ENCODE measurements at regions of chr1 and their contacts with region 1.

Region 1: DNA sequence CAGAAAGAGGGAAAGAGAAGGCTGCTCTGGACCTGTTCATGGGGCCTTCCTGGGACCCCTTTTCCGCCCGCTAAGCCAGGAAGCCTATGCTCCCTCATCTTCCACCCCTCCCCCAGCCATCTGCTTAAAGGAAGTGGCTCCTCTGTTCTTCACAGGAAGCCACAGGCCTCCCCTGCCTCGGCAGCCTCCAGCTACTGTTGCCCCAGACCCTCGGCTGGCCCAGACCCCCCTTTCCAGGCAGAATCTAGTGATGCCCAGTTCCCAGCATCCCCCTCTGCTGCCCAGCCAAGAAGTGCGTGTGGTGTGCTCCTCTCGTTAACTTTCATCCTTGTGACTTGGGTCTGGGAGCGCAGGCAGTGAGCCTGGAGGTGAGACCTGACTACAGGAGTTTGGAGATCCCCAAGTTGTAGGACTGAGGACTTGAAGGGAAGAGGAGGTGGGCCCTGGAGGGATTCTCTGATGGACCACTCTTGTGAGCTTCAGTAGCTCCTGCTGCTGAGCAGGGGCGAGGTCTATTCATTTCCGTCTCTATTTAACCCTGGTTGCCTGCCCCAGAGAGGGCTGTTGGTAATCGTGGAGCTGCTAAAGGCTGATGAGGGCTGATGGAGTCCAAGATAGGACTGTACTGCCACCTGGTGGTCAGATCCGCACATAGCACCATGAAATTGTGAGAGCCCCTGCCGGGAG is 9.1 kb downstream of the IFI6 start:
- DNase-seq: peak; percentile 76
- CTCF ChIP-seq: peak; percentile 82

Region 2: DNA sequence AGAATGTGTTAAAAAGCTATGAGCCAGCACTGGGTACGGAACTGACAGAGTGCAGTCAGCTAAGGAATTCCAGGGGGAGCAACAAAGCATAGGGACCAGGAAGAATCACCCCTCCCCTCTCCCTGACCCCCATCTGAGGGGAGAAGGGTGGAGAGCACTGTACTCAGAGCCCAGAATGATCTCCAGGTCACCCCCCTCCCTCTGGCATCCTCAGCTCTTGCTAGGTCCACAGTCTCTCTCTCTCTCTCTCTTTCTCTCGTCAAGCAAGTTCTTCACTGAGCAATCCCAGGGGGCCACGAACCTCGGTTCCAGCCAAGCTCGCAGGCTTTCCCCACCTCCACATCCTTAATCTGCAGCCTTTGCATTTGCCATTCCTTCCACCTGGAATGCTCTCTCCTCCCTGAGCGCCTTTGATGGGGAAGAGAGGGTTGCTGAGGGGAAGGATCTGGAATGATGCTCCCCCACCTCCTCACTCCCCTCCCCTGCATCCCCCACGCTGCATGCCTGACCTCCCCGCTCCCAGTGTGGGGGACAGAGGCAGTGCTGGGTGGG is 166.2 kb before region 1 on chr1:
- CTCF ChIA-PET with region 1: no interaction called
- POLR2A ChIA-PET with region 1: no interaction called
- DNase-seq: no peak
- CTCF ChIP-seq: no peak

Region 3: DNA sequence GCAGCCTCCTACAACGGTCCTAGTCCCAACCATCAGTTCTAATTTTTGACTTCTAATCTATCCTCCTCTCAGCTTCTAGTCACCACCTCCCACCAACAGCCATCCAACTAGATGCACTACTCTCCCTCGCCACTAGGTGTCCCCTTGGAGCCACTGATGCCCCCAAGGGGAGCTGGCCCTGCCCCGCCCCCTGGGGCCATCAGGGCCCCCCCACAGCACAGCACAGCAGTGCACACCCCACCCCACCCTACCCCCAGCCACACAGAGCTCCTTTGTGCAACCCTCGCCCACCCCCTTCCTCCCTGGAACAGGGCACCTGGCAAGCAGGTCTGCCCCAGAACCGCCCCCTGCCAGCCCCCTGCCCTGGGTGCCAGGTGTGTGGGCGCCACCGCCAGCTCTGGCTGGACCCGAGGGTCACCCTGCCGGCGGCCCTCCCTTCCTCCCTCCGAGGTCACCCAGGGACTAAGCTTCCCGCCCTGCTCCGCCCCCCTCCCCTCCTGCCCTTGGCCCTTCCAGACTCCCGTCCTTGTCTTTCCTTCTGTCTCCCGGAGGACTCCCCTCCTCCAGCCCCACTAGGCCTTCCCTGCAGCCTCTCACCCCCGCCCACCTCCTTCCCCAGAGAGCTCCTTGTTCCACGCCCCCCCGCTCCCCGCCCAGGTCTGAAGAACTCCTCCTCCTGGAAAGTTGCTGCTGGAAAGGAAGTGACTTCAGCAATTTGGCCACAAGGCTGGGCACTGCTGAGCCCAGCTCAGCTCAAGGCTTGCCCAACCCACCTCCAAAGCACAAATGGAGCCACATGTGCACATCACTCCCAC is 105.9 kb before region 1 on chr1:
- CTCF ChIA-PET with region 1: interaction called, 51 read pairs
- POLR2A ChIA-PET with region 1: no interaction called
- DNase-seq: peak; percentile 91
- CTCF ChIP-seq: peak; percentile 85

Region 4: GRCh38 chr1:27581823-27582243 is 81.0 kb before region 1 on chr1:
- CTCF ChIA-PET with region 1: interaction called, 11 read pairs
- POLR2A ChIA-PET with region 1: no interaction called
- DNase-seq: no peak
- CTCF ChIP-seq: no peak

Region 5: DNA sequence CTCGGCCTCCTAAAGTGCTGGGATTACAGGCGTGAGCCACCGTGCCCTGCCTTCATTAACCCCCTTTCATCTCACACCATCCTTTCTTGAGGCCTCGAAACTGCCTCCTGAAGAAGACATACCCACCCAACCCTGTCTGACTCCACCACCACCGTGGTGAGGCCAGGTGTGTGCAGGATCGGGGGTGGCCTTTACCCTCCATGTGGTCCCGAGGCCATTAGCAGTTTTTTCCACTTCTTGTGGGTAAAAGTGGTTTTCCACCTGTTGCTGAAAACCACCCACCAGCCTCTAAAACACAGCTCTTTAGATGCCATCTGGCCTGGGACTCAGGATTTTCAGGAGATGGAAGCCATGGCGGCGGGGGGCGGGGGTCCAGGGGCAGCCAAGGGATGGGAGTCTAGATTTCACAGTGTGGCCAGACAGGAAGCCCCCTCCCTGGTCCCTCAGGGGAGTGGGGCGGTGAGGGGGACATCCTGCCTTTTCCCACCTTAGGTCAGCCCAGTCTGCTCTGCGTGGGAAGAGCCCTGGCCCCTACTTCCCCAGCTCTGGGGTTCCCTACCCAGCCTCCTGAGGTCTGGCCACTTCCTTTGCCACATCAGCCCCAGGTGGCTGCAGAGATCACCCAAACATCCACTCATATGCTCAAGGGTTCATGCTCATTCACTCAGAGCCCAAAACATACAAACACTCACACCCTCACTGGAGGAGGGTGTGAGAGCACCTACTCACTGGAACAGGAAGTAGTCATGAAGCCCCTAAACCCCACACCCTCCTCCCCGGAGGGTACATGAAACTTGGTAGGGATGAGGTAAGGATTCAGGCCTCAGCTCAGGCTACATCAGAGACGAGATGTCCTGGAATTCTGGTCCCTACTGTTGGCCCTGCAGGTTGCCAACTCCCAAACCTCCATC is 30.2 kb before region 1 on chr1:
- CTCF ChIA-PET with region 1: interaction called, 27 read pairs
- POLR2A ChIA-PET with region 1: interaction called, 6 read pairs
- DNase-seq: peak; percentile 67
- CTCF ChIP-seq: no peak

Region 6: GRCh38 chr1:27872802-27873551 is 210.1 kb after region 1 on chr1:
- CTCF ChIA-PET with region 1: no interaction called
- POLR2A ChIA-PET with region 1: interaction called, 11 read pairs
- DNase-seq: no peak
- CTCF ChIP-seq: no peak

Measured in GM10248 (cell line).